Transverse colon (tissue), 4 donors: ENCODE measurements at regions of chr1 and their contacts with region 1.

Region 1: GRCh38 chr1:38686167-38686926 is 173.2 kb downstream of the RRAGC start:
- DNase-seq: no peak
- H3K4me3 ChIP-seq: no peak overlapping the region
- H3K27ac ChIP-seq: no peak overlapping the region
- H3K4me1 ChIP-seq: no peaks in the 10 kb centered on the region
- H3K27me3 ChIP-seq: peaks cover 35% of the 10 kb centered on the region
- CTCF ChIP-seq: no peak
- EP300 ChIP-seq: no peak
- POLR2A ChIP-seq: no peak

Region 2: DNA sequence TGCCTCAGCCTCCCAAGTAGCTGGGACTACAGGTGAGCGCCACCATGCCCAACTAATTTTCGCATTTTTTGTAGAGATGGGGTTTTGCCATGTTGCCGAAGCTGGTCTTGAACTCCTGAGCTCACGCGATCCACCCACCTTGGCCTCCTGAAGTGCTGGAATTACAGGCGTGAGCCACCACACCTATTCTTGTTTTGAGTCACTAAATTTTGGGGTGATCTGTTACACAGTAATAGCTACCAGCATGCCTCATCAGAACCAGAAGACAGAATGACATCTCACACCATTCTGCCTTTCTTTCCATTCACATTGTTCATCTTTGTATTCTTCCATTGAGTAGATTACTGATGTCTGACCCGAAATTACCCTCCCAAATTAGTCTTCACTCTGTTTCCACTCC is 246.2 kb after region 1 on chr1:
- in situ Hi-C with region 1: no loop called
- intact Hi-C with region 1: loop called (anchors 5 kb)
- DNase-seq: no peak
- H3K4me3 ChIP-seq: no peak overlapping the region
- H3K27ac ChIP-seq: no peak overlapping the region
- H3K4me1 ChIP-seq: no peaks in the 10 kb centered on the region
- H3K27me3 ChIP-seq: no peaks in the 10 kb centered on the region
- CTCF ChIP-seq: no peak
- EP300 ChIP-seq: no peak
- POLR2A ChIP-seq: no peak